Activated naive CD4-positive, alpha-beta T cell treated with anti-CD3 and anti-CD28 coated beads for 36 hours (primary cell): ENCODE measurements at regions of chr18 and their contacts with region 1.

Region 1: GRCh38 chr18:35240664-35241447 is at the start of gene ZNF397:
- DNase-seq: peak; percentile 98
- H3K4me3 Mint-ChIP-seq: peak within 1 kb of the TSS; percentile 94
- H3K27ac Mint-ChIP-seq: peak within 1 kb of the TSS; percentile 99
- H3K4me1 Mint-ChIP-seq: peaks cover 38% of the 10 kb centered on the region
- H3K27me3 Mint-ChIP-seq: no peaks in the 10 kb centered on the region
- total RNA-seq, gene ZNF397: 22.6 to 23.2 TPM

Region 2: DNA sequence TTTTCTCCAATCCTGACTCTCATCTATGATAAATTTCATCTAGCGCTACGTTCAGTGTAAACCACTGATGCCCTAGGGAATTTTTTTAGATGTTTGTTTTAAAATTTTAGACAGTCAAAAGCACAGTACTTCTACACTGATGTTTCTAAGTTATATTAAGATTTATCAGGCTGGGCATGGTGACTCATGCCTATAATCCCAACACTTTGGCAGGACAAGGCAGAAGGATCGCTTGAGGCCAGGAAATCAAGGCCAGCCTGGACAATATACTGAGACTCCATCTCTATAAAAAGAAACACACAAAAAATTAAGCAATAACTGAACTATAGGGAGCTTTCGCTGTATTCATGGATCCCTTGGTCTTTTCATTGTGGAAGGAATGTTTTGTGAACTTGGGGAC is 250.3 kb before region 1 on chr18:
- CTCF ChIA-PET with region 1: no interaction called
- intact Hi-C with region 1: no loop called
- DNase-seq: no peak
- H3K4me3 Mint-ChIP-seq: no peak overlapping the region
- H3K27ac Mint-ChIP-seq: no peak overlapping the region
- H3K4me1 Mint-ChIP-seq: peaks cover 9% of the 10 kb centered on the region
- H3K27me3 Mint-ChIP-seq: no peaks in the 10 kb centered on the region

Region 3: GRCh38 chr18:35290073-35290735 is 49.3 kb after region 1 on chr18 and contains the start of gene ZSCAN30:
- CTCF ChIA-PET with region 1: interaction called, 4 read pairs
- intact Hi-C with region 1: loop called (anchors 1 kb)
- DNase-seq: peak; percentile 96
- H3K4me3 Mint-ChIP-seq: peak within 1 kb of the TSS; percentile 96
- H3K27ac Mint-ChIP-seq: peak within 1 kb of the TSS; percentile 97
- H3K4me1 Mint-ChIP-seq: peaks cover 48% of the 10 kb centered on the region
- H3K27me3 Mint-ChIP-seq: peaks cover 2% of the 10 kb centered on the region
- total RNA-seq, gene ZSCAN30: 12.0 to 14.3 TPM

Region 4: DNA sequence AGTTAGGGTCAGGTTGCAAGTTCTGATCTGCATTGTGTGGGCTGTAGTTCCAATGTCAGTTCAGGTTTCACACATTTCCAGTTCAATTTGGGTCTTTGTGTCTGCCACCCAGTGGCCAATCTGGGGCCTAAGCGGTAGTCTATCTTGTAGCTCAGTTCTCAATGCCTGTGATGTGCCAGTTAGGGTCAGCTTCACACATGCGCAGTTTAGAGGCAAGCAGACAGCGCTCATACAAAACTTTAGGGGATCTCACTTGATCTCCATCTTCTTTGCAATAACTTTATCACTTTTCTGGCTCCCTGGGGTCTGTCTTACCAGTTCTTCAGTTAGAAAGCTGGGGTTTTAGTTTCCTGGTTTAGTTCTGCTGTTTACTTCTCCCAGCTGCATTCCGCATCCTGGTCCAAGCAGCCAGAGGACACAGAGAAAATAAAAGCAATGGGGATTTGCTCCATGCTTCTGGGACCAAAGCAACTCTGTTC is 114.3 kb after region 1 on chr18:
- CTCF ChIA-PET with region 1: interaction called, 4 read pairs
- intact Hi-C with region 1: loop called (anchors 2 kb)
- DNase-seq: peak; percentile 68
- H3K4me3 Mint-ChIP-seq: no peak overlapping the region
- H3K27ac Mint-ChIP-seq: no peak overlapping the region
- H3K4me1 Mint-ChIP-seq: peaks cover 5% of the 10 kb centered on the region
- H3K27me3 Mint-ChIP-seq: no peaks in the 10 kb centered on the region

Region 5: DNA sequence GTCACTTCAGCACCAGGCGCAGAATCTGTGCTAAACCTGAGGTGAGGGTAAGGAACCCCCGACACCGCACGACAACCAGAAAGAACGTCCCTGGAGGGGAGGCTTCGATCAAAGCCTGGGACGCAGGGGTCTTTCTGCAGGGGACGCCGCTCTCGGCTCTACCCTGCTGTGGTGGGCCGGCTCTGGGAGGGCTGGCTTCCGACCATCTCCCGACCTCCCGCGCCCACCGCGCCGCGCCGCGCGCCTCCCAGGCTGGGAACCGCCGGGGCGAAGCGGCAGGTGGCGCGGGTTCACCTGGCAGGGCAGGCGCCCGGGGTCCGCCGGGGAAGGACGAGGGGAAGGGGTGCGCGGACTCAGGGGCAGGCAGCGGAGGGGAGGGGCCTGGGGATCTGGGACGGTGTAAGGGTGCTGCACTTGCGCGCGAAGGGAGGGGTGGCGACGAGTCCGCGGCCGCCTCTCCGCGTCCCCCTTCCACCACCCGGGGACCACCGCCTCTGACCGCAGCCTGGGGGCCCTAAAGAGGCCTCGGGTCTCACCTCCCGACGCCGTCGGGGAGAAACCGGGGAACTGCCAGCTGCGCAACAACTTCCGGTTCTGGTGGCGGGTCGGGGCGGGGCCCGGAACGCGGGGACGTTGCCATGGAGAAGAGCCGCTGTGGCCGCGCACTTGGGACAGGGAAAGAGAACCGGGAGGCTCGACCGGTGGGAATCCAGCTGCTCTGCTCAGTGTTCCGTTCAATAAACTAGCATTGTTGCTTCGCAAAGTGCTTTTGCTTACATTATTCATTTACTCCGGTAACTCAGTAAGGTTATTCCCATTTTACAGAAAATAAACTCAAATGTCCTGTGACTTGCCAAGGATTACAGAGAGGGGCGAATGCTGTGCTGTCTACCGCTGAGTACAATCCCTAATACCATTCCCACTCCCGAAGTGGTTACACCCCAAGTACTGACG is 136.2 kb after region 1 on chr18 and contains the start of gene ZNF396:
- CTCF ChIA-PET with region 1: interaction called, 4 read pairs
- intact Hi-C with region 1: loop called (anchors 1 kb)
- DNase-seq: peak; percentile 83
- H3K4me3 Mint-ChIP-seq: peak within 1 kb of the TSS; percentile 79
- H3K27ac Mint-ChIP-seq: peak within 1 kb of the TSS; percentile 13
- H3K4me1 Mint-ChIP-seq: peaks cover 6% of the 10 kb centered on the region
- H3K27me3 Mint-ChIP-seq: no peaks in the 10 kb centered on the region
- total RNA-seq, gene ZNF396: 0.74 to 0.77 TPM